ENCODE measurements at regions of chr18 and their contacts with region 1.

Region 1: DNA sequence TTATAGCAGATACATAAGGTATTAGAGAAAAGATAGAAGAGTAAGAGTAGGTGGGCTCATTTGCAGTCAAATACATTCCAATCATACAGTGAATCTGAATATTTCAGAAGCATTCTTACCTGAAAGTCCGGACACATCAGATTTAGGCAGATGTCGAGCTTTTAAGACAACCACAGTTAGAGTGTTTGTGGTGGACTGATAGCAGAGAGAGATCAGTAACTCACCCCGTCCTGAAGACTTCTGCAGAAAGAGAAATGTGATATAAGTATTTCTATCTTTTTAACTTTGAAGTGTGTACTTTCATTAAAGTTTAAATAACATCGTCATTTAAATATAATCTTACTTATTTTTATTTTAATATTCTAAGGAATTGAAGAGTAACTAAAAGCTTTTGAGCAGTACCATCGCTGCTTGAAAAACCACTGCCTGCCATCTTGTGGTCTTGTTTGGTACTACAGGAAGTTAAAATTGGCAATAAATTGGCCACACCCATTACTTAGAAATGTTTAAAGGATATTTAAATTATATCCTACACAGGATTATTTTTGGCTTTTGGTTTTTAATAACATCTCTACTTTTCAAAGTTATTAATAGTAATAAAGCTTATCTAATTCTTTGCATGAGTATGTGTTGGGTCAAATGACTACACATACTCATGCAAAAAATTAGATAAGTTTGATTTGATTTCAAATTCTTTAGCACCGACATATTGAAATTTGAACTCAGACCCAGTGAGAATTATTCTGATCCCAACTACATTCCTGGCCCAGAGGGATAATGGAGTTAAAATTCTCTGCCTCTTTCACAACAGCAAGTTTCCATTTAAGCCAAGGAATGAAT is 5.5 kb downstream of the SYT4 start:
- DNase-seq: peak in 3 of 5 donors; percentile 15 to 48 (median 46)
- H3K4me3 ChIP-seq: no peak overlapping the region
- H3K27ac ChIP-seq: no peak overlapping the region
- H3K4me1 ChIP-seq: no peaks in the 10 kb centered on the region
- H3K27me3 ChIP-seq: no peaks in the 10 kb centered on the region
- CTCF ChIP-seq: peak; percentile 78

Region 2: DNA sequence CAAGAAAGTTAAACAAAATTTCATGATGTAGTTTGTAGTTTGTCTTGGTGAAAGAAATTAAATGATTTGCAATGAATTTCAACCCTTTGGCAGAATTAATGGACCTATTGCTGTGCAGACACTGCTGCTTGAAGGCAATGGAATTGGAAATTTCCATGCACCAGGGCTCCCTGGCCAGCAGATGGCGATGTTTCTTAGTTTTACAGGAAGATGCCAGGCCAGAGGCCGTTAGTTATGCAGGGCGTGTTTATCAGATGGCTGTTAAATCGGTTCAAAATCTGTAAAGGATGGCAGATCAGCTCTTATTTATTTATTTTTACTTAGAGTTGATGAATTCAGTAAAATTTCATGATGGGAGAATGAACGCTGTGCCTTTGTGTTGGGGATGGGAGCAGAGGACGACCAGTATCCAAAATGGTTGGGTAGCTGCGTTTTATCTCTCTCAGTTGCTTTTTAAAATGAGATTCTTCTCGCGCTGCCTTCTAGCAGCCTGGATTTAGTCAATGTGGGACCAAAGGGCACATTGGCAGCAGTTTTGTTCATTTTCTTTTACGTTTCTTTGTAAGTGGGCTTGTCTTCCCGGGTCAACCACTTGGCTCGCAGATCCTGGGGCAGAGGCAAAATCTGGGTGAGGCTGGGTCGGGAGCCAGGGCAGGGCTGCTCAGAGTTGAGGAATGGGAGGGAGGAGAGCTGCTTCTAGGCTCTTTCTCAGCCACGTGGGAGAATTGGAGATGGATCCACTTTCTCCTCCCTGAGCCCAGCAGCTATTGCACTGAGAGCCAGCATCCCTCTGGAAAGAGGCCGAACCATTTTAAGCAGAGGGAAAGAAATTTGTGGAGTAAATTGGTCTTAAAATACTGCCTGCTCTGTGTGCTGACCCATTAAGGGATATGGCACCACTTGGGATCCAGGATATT is 972.8 kb before region 1 on chr18:
- intact Hi-C with region 1: loop called (anchors 10 kb)
- DNase-seq: peak; percentile 75 to 91 (median 85)
- H3K4me3 ChIP-seq: peak overlapping the region in 2 of 3 donors; percentile 16 to 35
- H3K27ac ChIP-seq: no peak overlapping the region
- H3K4me1 ChIP-seq: no peaks in the 10 kb centered on the region
- H3K27me3 ChIP-seq: no peaks in the 10 kb centered on the region
- CTCF ChIP-seq: peak; percentile 91

Region 3: GRCh38 chr18:42586601-42587000 is 685.2 kb before region 1 on chr18:
- intact Hi-C with region 1: loop called (anchors 10 kb)
- DNase-seq: peak in 3 of 5 donors; percentile 17 to 72 (median 60)
- H3K4me3 ChIP-seq: no peak overlapping the region
- H3K27ac ChIP-seq: no peak overlapping the region
- H3K4me1 ChIP-seq: no peaks in the 10 kb centered on the region
- H3K27me3 ChIP-seq: no peaks in the 10 kb centered on the region
- CTCF ChIP-seq: no peak

Region 4: GRCh38 chr18:43013486-43013885 is 258.3 kb before region 1 on chr18:
- intact Hi-C with region 1: no loop called
- DNase-seq: no peak
- H3K4me3 ChIP-seq: no peak overlapping the region
- H3K27ac ChIP-seq: no peak overlapping the region
- H3K4me1 ChIP-seq: peaks cover 0 to 2% (median 0%) of the 10 kb centered on the region in 3 donors
- H3K27me3 ChIP-seq: no peaks in the 10 kb centered on the region
- CTCF ChIP-seq: no peak